PC-3 (cell line): ENCODE measurements at regions of chrX and their contacts with region 1.

Region 1: DNA sequence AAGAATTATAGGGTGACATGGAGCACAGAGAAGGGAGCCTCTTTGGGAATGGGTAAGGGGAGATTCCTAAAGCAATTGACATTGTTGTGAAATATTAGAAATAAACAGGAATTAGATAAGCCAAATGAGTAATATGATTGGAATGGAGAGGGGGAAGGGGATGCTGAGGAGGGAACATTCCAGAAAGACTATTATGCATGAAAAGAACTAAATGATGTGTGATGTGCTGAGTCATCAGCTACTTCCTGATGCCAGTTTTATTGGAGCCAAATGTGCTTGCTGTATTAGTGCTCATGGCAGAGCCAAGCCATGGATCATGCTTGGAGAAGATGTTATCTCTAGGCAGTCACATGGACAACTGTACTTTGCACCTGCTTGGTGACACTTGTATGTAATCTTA is 189.0 kb upstream of the HCCS start:
- DNase-seq: peak; percentile 90
- ATAC-seq: peak; percentile 86
- H3K4me3 ChIP-seq: no peak overlapping the region
- H3K27ac ChIP-seq: no peak overlapping the region
- H3K4me1 ChIP-seq: peaks cover 14% of the 10 kb centered on the region
- H3K27me3 ChIP-seq: no peaks in the 10 kb centered on the region
- CTCF ChIP-seq: no peak

Region 2: GRCh38 chrX:10833299-10834169 is 88.6 kb before region 1 on chrX:
- CTCF ChIA-PET with region 1: no interaction called
- POLR2A ChIA-PET with region 1: no interaction called
- intact Hi-C with region 1: loop called (anchors 5 kb)
- DNase-seq: peak; percentile 85
- ATAC-seq: peak; percentile 91
- H3K4me3 ChIP-seq: peak overlapping the region; percentile 82
- H3K27ac ChIP-seq: peak overlapping the region; percentile 47
- H3K4me1 ChIP-seq: peaks cover 20% of the 10 kb centered on the region
- H3K27me3 ChIP-seq: no peaks in the 10 kb centered on the region
- CTCF ChIP-seq: no peak

Region 3: DNA sequence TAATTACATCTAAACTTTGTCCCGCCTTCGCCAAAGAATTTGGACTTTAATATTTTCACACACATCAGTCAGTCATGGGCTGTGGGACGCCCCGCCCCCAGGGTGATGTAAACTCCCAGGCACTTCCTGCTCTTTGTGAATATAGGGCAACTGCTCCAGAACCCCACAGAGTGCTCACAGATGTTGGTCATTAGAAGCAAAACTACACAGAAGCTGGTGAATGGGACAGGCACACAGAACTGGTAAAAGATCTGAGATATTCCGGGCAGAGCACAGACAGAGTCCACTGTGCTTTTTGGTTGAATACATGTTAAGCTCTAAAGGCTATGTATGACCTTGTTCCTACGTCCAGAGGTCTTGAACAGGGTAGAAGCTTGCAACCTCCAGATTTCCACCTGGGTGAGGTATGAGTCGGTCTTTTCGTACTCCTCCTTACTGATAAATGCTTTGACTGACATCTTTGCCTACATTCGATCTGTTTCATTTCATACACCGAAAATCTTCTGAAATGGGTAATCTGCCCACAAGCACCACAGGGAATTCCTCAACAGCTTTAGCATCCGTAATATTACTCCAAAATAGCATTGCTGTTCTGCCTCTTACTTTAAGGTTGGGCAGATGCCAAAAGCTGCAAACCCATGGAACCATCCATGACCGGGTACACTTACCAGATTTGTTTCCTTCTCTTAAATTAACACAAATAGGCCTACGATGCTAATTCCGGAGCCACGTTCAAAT is 515.7 kb after region 1 on chrX:
- CTCF ChIA-PET with region 1: no interaction called
- POLR2A ChIA-PET with region 1: no interaction called
- intact Hi-C with region 1: no loop called
- DNase-seq: peak; percentile 8
- ATAC-seq: no peak
- H3K4me3 ChIP-seq: no peak overlapping the region
- H3K27ac ChIP-seq: no peak overlapping the region
- H3K4me1 ChIP-seq: no peaks in the 10 kb centered on the region; the same call in 1 of the 2 replicates
- H3K27me3 ChIP-seq: no peaks in the 10 kb centered on the region
- CTCF ChIP-seq: no peak